ENCODE measurements at regions of chr1 and their contacts with region 1.

Region 1: GRCh38 chr1:184075055-184076029 is 23.8 kb downstream of the TSEN15 start:
- DNase-seq: peak in 1 of 2 donors; percentile 61
- ATAC-seq: peak; percentile 52 to 71 (median 64)
- H3K4me3 ChIP-seq: no peak overlapping the region
- H3K4me3 Mint-ChIP-seq: no peak overlapping the region
- H3K27ac ChIP-seq: no peak overlapping the region
- H3K27ac Mint-ChIP-seq: peak overlapping the region in 1 of 2 donors; percentile 47
- H3K4me1 ChIP-seq: no peaks in the 10 kb centered on the region
- H3K4me1 Mint-ChIP-seq: peaks cover 4 to 5% of the 10 kb centered on the region in 2 donors
- H3K27me3 ChIP-seq: no peaks in the 10 kb centered on the region
- H3K27me3 Mint-ChIP-seq: no peaks in the 10 kb centered on the region
- CTCF ChIP-seq: peak; percentile 67

Region 2: DNA sequence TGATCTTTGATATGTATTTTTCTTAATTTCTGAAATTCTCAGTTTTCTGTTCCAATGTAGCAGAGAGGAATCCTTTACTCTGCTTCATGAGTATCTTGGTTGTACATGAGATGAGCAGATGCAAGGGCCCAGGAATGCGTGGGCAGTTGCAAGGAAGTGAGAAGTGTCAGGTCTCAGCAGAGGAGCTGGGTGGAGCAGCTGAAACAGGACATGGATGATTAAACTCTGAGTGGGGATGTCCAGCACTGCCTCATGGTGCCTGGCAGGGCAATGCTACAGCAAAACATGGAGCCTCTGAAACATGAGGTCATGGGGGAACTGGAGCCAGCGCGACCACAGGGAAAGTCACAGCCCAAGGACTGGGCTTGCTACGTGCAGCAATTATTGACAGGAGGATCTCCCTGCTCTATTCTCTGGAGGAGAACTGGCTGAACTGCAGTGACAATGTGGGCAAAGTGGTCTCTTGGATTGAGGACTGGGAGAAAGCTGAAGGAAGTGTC is 86.2 kb before region 1 on chr1:
- intact Hi-C with region 1: no loop called
- DNase-seq: no peak
- ATAC-seq: peak in 1 of 3 donors; percentile 24
- H3K4me3 ChIP-seq: no peak overlapping the region
- H3K4me3 Mint-ChIP-seq: no peak overlapping the region
- H3K27ac ChIP-seq: no peak overlapping the region
- H3K27ac Mint-ChIP-seq: peak overlapping the region in 1 of 2 donors; percentile 37
- H3K4me1 ChIP-seq: peaks cover 10% of the 10 kb centered on the region
- H3K4me1 Mint-ChIP-seq: peaks cover 11 to 30% of the 10 kb centered on the region in 2 donors
- H3K27me3 ChIP-seq: no peaks in the 10 kb centered on the region
- H3K27me3 Mint-ChIP-seq: no peaks in the 10 kb centered on the region
- CTCF ChIP-seq: no peak

Region 3: GRCh38 chr1:184222652-184223052 is 147.3 kb after region 1 on chr1:
- intact Hi-C with region 1: loop called (anchors 1 kb)
- DNase-seq: peak; percentile 39 to 63
- ATAC-seq: peak; percentile 60 to 76 (median 75)
- H3K4me3 ChIP-seq: no peak overlapping the region
- H3K4me3 Mint-ChIP-seq: peak overlapping the region; percentile 1
- H3K27ac ChIP-seq: no peak overlapping the region
- H3K27ac Mint-ChIP-seq: no peak overlapping the region
- H3K4me1 ChIP-seq: no peaks in the 10 kb centered on the region
- H3K4me1 Mint-ChIP-seq: peaks cover 0 to 5% of the 10 kb centered on the region in 2 donors
- H3K27me3 ChIP-seq: no peaks in the 10 kb centered on the region
- H3K27me3 Mint-ChIP-seq: peaks cover 10 to 18% of the 10 kb centered on the region in 2 donors
- CTCF ChIP-seq: peak; percentile 92

Region 4: DNA sequence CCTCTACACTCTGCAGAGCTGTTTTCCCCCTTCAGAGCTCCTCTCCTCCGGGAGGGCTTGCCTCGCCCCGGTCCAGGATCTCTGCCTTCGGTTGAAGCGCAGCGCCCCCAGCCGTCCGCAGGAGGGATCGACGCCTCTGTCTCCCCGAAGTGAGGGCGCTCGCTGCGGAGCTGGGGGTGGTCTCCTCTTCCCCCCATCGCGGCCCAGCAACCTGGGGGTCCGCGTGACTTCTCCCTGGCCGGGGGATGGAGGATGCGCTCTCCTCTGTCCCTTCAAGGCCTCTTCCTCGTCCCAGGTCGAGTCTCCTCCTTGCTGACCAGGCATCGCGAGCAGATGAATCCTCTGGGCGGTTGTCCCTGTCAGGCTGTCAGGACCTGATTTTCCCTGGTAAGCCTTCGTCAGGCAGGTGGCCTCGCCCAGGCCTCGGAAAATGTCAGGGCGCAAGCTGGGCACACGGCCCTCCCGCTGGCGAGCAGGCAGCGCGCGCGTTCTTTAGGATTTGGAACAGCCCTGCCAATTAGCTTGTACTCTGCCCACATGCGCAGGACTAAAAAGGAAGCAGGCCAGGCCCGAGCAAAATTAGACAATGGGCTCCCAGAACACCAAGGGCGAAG is 588.8 kb after region 1 on chr1:
- intact Hi-C with region 1: loop called (anchors 1 kb)
- DNase-seq: peak; percentile 48 to 60
- ATAC-seq: peak; percentile 76 to 86 (median 79)
- H3K4me3 ChIP-seq: no peak overlapping the region
- H3K4me3 Mint-ChIP-seq: no peak overlapping the region
- H3K27ac ChIP-seq: no peak overlapping the region
- H3K27ac Mint-ChIP-seq: no peak overlapping the region
- H3K4me1 ChIP-seq: peaks cover 10% of the 10 kb centered on the region
- H3K4me1 Mint-ChIP-seq: peaks cover 18 to 19% of the 10 kb centered on the region in 2 donors
- H3K27me3 ChIP-seq: peaks cover 9% of the 10 kb centered on the region
- H3K27me3 Mint-ChIP-seq: peaks cover 18 to 25% of the 10 kb centered on the region in 2 donors
- CTCF ChIP-seq: peak; percentile 86

Measured in natural killer cell (primary cell).